Transverse colon (tissue), 4 donors: ENCODE measurements at regions of chr11 and their contacts with region 1.

Region 1: DNA sequence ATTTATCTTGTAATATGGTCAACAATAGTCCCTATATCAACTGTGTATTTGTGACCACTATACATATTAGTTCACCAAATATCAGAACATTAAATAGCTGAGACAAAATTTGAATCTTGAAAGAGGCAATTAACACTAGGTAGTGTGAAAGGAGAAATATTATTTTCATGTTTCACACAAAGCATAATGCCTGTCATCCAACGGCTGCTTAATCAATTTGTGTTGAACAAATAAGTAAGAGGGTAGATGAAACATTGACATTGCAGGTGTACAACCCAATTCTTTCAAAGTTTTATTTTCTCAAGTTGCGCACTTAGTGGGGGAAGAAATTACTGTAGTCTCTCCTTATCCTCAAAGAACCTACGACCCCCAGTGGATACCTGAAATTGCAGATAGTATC is 3.4 kb upstream of the OR8I2 start:
- DNase-seq: no peak
- H3K4me3 ChIP-seq: no peak overlapping the region
- H3K27ac ChIP-seq: no peak overlapping the region
- H3K4me1 ChIP-seq: no peaks in the 10 kb centered on the region
- H3K27me3 ChIP-seq: no peaks in the 10 kb centered on the region
- CTCF ChIP-seq: no peak
- EP300 ChIP-seq: no peak
- POLR2A ChIP-seq: no peak

Region 2: DNA sequence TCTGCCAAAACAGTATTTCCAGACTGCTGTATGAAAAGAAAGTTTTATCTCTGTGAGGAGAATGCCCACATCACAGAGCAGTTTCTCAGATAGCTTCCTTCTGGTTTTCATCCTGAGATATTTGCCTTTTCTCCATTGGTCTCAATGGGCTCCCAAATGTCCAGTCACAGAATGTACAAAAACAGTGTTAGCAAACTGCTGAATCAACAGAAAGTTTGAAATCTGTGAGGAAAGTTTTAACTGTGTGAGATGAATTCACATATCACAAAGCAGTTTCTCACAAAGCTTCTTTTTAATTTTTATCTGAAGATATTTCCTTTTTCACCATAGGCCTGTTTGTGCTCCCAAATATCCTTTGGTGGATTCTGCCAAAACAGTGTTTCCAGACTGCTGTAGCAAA is 1035.0 kb before region 1 on chr11:
- in situ Hi-C with region 1: no loop called
- intact Hi-C with region 1: no loop called
- DNase-seq: no peak
- H3K4me3 ChIP-seq: no peak overlapping the region
- H3K27ac ChIP-seq: no peak overlapping the region
- H3K4me1 ChIP-seq: no peaks in the 10 kb centered on the region
- H3K27me3 ChIP-seq: no peaks in the 10 kb centered on the region
- CTCF ChIP-seq: no peak
- EP300 ChIP-seq: no peak
- POLR2A ChIP-seq: no peak

Region 3: GRCh38 chr11:56027354-56027753 is 62.3 kb before region 1 on chr11 and contains the start of gene OR5AS1:
- in situ Hi-C with region 1: loop called in 1 of 4 experiments (anchors 10 kb)
- intact Hi-C with region 1: no loop called
- DNase-seq: no peak
- H3K4me3 ChIP-seq: no peak within 1 kb of the TSS
- H3K27ac ChIP-seq: no peak within 1 kb of the TSS
- H3K4me1 ChIP-seq: no peaks in the 10 kb centered on the region
- H3K27me3 ChIP-seq: no peaks in the 10 kb centered on the region
- CTCF ChIP-seq: no peak
- EP300 ChIP-seq: no peak
- POLR2A ChIP-seq: no peak
- total RNA-seq, gene OR5AS1: not detected